IMR-90 (cell line): ENCODE measurements at regions of chr10 and their contacts with region 1.

Region 1: GRCh38 chr10:100518761-100519241 is 860 bp downstream of the SEC31B start:
- DNase-seq: peak; percentile 70
- ATAC-seq: peak; percentile 67
- H3K4me3 ChIP-seq: no peak overlapping the region
- H3K27ac ChIP-seq: no peak overlapping the region
- H3K4me1 ChIP-seq: peaks cover 5% of the 10 kb centered on the region; the same call in 1 of the 2 replicates
- H3K27me3 ChIP-seq: no peaks in the 10 kb centered on the region
- CTCF ChIP-seq: peak; percentile 72
- POLR2A ChIP-seq: no peak
- RAD21 ChIP-seq: peak; percentile 66

Region 2: DNA sequence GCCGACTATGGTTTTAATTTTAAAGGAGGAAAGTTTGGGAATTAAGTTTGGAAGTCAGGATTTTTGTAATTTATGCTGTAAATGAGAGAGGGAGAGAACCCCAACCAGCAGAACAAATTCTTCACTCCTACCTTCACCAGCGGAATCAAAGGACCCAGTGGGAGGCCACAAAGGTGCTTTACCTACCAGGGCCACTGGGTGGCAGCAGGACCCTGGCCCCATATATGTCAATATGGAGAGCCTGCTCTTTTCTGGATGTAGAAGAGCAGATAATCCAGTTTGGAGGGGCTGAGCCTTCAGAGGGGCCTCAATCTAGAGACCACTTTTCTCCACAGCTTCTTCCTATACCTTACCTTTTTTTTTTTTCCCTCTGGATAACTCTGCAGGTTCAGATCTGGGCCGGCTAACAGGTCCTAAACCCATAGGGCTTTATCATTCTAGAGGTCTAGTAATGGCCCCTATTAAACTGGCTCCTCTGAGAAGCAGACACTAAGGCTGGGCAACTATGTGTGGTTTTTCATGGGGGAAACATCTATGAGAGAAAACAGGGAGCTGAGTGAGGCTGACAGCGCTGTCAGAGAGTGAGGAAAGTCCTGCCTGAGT is 180.3 kb before region 1 on chr10:
- CTCF ChIA-PET with region 1: interaction called, 6 read pairs
- POLR2A ChIA-PET with region 1: no interaction called
- dilution Hi-C with region 1: no loop called
- in situ Hi-C with region 1: no loop called
- intact Hi-C with region 1: loop called (anchors 1 kb)
- DNase-seq: peak; percentile 45
- ATAC-seq: peak; percentile 81
- H3K4me3 ChIP-seq: no peak overlapping the region
- H3K27ac ChIP-seq: no peak overlapping the region
- H3K4me1 ChIP-seq: peaks cover 8% of the 10 kb centered on the region; the same call in 1 of the 2 replicates
- H3K27me3 ChIP-seq: peaks cover 18% of the 10 kb centered on the region
- CTCF ChIP-seq: peak; percentile 95
- POLR2A ChIP-seq: no peak
- RAD21 ChIP-seq: peak; percentile 97

Region 3: DNA sequence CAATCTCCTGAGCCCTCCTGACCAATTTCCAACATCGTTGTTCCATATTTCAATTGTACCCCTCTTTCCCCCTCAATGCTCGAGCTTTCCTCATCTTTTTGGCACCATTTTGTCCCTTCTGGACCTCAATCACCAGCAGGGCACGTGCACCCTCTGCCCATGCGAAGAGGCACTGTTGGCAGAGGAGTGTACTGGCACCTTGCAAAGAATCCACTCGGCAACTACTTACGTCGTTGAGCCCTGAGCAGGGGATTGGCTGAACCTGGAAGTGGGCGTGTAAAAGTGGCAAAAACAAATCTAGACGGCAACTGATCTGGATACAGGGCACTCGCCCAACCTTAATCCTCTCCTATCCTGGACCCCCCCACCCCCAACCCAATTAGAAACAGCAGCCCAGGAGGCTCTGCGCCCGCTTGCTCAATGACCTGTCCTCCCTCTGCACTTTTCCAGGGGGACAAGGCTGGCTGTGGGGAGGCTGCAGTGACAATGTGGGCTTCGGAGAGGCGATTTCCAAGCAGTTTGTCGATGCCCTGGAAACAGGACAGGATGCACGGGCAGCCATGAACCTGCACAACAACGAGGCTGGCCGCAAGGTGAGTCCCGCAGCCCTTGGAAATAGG is 37.2 kb before region 1 on chr10:
- CTCF ChIA-PET with region 1: interaction called, 12 read pairs
- POLR2A ChIA-PET with region 1: no interaction called
- dilution Hi-C with region 1: no loop called
- in situ Hi-C with region 1: no loop called
- intact Hi-C with region 1: no loop called
- DNase-seq: peak; percentile 81
- ATAC-seq: peak; percentile 95
- H3K4me3 ChIP-seq: peak overlapping the region; percentile 38
- H3K27ac ChIP-seq: no peak overlapping the region
- H3K4me1 ChIP-seq: peaks cover 4% of the 10 kb centered on the region; the same call in 1 of the 2 replicates
- H3K27me3 ChIP-seq: peaks cover 36% of the 10 kb centered on the region
- CTCF ChIP-seq: no peak
- POLR2A ChIP-seq: no peak
- RAD21 ChIP-seq: no peak

Region 4: GRCh38 chr10:100529475-100530298 is 10.9 kb after region 1 on chr10 and contains the start of gene NDUFB8:
- CTCF ChIA-PET with region 1: interaction called, 12 read pairs
- POLR2A ChIA-PET with region 1: no interaction called
- dilution Hi-C with region 1: no loop called
- in situ Hi-C with region 1: no loop called
- intact Hi-C with region 1: no loop called
- DNase-seq: peak; percentile 72
- ATAC-seq: peak; percentile 97
- H3K4me3 ChIP-seq: peak within 1 kb of the TSS; percentile 86
- H3K27ac ChIP-seq: peak within 1 kb of the TSS; percentile 84
- H3K4me1 ChIP-seq: peaks cover 5% of the 10 kb centered on the region
- H3K27me3 ChIP-seq: no peaks in the 10 kb centered on the region
- CTCF ChIP-seq: no peak
- POLR2A ChIP-seq: 0 out of 2 replicates have a peak, but pooled peaks have one; percentile 8
- RAD21 ChIP-seq: no peak
- total RNA-seq, gene NDUFB8: 98.3 and 99.1 TPM in 2 replicates

Region 5: DNA sequence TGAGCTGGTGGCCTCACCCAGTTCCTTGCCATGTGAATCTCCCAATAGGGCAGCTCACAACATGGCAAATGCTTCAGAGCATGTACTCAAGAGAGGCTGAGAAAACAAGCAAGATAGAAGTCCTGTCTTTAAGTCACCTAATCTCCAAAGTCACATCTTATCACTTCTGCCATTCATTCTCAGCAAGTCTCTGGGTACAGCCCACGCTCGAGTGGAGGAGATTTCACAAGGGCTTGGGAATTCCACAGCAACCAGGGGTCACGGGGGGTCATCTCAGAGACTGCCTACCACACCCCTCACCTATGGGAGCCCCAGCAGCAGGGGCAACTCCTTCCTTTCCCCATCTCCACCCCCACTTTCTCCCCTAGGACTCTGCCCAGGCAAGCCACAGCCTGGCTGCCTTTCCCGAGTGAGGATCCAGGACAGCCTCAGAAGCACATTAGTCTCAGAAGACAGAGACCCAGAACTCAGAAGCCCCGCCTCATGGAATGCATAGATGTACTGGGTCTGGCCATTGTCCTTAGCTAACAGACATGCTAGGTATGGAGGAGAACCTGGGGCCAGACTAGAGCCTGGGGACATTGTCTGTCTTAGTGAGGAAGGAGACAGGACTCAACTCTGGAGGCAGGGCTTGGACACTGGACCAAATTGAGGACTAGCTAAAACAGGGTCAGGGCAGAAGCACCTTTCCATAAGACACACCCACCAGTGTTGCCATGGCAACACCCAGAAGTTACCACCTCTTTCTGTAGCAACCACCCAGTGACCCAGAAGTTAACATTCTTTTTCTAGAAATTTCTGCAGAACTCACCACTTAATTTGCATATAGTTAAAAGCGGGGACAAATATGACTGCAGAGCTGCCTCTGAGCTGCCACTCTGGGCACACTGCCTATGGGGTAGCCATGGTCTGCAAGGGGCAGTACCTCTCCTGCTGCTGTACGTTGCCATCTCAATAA is 639.6 kb after region 1 on chr10:
- CTCF ChIA-PET with region 1: no interaction called
- POLR2A ChIA-PET with region 1: no interaction called
- dilution Hi-C with region 1: no loop called
- in situ Hi-C with region 1: no loop called
- intact Hi-C with region 1: no loop called
- DNase-seq: no peak
- ATAC-seq: peak; percentile 8
- H3K4me3 ChIP-seq: no peak overlapping the region
- H3K27ac ChIP-seq: no peak overlapping the region
- H3K4me1 ChIP-seq: no peaks in the 10 kb centered on the region
- H3K27me3 ChIP-seq: peaks cover 42% of the 10 kb centered on the region
- CTCF ChIP-seq: no peak
- POLR2A ChIP-seq: no peak
- RAD21 ChIP-seq: no peak